GM13977 (cell line): ENCODE measurements at regions of chr9 and their contacts with region 1.

Region 1: DNA sequence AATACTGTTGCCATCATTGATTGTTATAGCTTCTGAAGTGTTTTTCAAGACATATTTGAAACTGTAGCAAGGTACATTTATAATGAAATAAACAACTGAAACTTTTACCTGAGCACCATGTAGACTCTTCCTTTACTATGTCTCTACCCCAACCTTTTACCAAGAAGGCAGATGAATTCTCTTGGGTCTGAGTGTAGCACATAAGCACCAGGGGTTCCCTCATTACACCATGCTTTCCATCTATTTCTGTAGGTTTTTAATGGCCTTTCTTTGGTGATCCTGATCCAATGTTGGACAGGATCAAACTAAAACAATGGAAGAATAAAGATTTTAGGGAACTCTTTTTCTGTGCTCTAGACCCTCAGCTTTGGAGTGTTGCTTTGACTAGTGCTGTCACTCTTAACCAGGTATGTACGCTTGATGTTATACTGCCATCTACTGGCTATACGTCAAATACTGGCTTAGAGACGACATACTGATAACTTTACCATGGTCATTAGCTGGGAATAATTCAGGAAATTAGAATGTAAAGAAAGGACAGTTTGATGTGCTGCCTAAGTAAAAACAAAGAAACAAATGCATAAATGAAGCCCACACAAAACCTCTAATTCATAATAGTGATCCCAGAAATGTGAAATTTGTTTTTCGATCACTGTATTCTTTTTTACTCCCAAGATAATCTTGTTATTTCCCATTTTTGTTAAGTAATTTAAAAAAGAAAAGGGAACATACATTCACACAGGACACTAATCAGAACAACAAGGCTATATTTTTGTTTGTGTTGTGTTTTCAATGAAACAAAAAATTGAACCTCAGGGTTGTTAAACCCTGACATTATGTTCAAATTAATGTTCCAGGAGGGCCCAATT is 30.7 kb downstream of the IFNW1 start:
- DNase-seq: peak; percentile 57
- CTCF ChIP-seq: peak; percentile 75

Region 2: DNA sequence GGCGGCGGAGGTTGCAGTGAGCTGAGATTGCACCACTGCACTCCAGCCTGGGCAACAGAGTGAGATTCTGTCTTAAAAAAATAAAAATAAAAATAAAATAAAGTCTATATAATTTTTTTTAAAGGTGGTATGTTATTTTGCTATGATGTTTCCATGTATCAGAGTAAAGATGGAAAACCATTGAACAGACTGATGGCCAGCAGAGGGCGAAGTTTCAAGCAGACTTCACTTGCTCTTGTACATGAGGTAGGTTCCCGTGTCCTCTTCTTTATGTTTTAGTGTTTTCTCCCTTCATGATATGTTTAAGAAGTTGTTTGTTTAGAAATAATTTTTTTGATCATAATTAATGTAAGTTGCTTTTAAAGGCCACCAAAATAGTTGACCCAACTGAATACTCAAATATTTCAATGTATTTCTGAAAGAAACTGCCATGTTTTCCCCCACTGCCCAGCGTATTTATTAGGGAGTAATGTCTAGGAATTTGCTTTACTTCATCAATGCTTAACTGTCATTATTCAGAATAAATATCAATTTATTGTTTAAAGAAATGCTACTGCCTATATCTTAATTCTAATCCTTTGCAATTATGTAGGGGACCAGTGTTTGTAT is 225.9 kb before region 1 on chr9:
- in situ Hi-C with region 1: loop called (anchors 25 kb)
- DNase-seq: peak; percentile 8
- CTCF ChIP-seq: peak; percentile 56

Region 3: DNA sequence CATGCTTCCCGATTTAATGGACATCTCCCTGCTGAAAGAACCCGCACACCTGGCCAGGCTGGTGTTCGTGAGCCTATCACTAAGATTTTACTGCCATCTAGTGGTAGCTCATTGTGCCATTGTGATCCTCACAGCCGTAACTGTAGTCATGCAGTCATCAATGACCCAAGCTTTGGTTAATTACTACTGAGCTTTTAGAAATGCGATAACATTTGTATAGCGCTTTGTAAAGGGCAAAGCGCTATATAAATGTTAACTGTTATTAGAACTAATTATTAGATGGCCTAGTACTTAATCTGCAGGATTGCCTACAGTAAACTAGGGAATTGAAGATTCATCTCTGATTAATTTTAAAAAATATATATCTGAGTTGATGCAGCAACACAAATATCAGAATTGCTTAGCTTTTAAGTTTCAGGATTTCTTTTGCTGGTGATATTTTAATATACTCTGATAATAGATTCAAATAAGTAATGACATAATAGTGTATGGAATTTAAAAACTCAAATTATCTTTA is 169.7 kb before region 1 on chr9:
- in situ Hi-C with region 1: no loop called
- DNase-seq: peak; percentile 54
- CTCF ChIP-seq: peak; percentile 83